Calu3 (cell line): ENCODE measurements at regions of chr2 and their contacts with region 1.

Region 1: GRCh38 chr2:230230087-230230486 is 4.6 kb downstream of the SP140 start:
- DNase-seq: peak; percentile 67
- H3K4me3 Mint-ChIP-seq: peak overlapping the region; percentile 31
- H3K27ac Mint-ChIP-seq: peak overlapping the region; percentile 66
- H3K4me1 Mint-ChIP-seq: peaks cover 50% of the 10 kb centered on the region
- H3K27me3 Mint-ChIP-seq: no peaks in the 10 kb centered on the region
- CTCF ChIP-seq: no peak

Region 2: GRCh38 chr2:230326453-230327417 is 96.6 kb after region 1 on chr2 and contains the start of gene SP140L:
- CTCF ChIA-PET with region 1: interaction called, 3 read pairs
- intact Hi-C with region 1: loop called (anchors 2 kb)
- DNase-seq: peak; percentile 82
- H3K4me3 Mint-ChIP-seq: peak within 1 kb of the TSS; percentile 89
- H3K27ac Mint-ChIP-seq: peak within 1 kb of the TSS; percentile 99
- H3K4me1 Mint-ChIP-seq: peaks cover 51% of the 10 kb centered on the region
- H3K27me3 Mint-ChIP-seq: no peaks in the 10 kb centered on the region
- CTCF ChIP-seq: no peak
- total RNA-seq, gene SP140L: 35.4 and 55.2 TPM in 2 replicates

Region 3: GRCh38 chr2:230411570-230412370 is 181.7 kb after region 1 on chr2:
- CTCF ChIA-PET with region 1: no interaction called
- intact Hi-C with region 1: loop called (anchors 5 kb)
- DNase-seq: peak; percentile 68
- H3K4me3 Mint-ChIP-seq: peak overlapping the region; percentile 91
- H3K27ac Mint-ChIP-seq: peak overlapping the region; percentile 87
- H3K4me1 Mint-ChIP-seq: peaks cover 38% of the 10 kb centered on the region
- H3K27me3 Mint-ChIP-seq: no peaks in the 10 kb centered on the region
- CTCF ChIP-seq: no peak